Activated CD4-positive, alpha-beta T cell treated with anti-CD3 and anti-CD28 coated beads for 36 hours (primary cell): ENCODE measurements at regions of chr4 and their contacts with region 1.

Region 1: DNA sequence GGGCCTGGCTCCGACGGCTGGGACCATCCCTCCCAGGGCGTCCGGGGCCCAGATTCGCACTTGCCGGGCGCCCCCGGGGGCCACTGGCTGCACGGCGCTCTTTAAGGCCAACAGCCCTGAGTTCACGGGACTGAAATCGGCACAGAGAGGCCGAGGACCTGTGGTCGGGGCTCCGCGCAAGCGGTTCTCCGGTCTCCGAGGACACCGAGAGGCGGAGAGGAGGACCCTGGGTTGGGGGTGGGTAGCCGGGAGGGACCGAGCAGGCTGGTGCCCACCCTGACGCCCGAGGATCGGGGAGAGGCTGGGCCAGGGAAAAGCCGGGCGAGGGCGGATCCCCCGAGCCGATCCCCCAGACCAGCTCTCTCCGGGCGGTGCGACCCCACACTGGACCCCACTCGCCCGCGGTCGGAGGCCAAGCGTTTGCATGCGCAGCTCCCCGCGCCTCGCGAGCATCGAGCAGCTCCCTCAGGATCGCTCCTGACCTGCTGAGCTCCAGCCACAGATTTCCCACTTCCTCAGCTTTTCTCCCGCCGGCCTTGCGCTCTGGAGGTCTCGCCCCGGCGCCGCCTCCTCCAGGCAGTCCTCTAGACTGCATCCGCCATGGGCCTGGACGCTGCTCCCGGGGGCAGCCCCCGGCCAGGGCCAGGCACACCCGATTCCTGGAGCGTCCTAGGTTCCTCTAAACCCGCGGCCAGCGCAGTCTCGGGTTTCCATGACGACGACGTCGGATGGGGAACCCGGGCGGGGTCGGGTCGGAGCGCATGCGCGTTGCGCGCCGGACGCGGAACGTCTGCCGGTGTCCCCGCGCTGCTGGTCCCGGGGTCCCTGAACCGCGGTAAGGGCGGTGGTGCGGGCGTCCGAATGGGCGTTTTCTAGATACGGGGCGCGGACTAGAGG is 17.6 kb upstream of the NAT8L start:
- DNase-seq: peak; percentile 93
- ATAC-seq: peak; percentile 87
- H3K4me3 Mint-ChIP-seq: peak overlapping the region; percentile 70
- H3K27ac Mint-ChIP-seq: no peak overlapping the region
- H3K4me1 Mint-ChIP-seq: no peaks in the 10 kb centered on the region
- H3K27me3 Mint-ChIP-seq: peaks cover 15% of the 10 kb centered on the region

Region 2: GRCh38 chr4:2059034-2059725 is 17.7 kb after region 1 on chr4 and contains the start of gene NAT8L:
- CTCF ChIA-PET with region 1: interaction called, 3 read pairs
- POLR2A ChIA-PET with region 1: no interaction called
- intact Hi-C with region 1: loop called (anchors 2 kb)
- DNase-seq: peak; percentile 51
- ATAC-seq: peak; percentile 56
- H3K4me3 Mint-ChIP-seq: no peak within 1 kb of the TSS
- H3K27ac Mint-ChIP-seq: no peak within 1 kb of the TSS
- H3K4me1 Mint-ChIP-seq: peaks cover 2% of the 10 kb centered on the region
- H3K27me3 Mint-ChIP-seq: peaks cover 22% of the 10 kb centered on the region
- total RNA-seq, gene NAT8L: 0.39 to 0.55 TPM

Region 3: DNA sequence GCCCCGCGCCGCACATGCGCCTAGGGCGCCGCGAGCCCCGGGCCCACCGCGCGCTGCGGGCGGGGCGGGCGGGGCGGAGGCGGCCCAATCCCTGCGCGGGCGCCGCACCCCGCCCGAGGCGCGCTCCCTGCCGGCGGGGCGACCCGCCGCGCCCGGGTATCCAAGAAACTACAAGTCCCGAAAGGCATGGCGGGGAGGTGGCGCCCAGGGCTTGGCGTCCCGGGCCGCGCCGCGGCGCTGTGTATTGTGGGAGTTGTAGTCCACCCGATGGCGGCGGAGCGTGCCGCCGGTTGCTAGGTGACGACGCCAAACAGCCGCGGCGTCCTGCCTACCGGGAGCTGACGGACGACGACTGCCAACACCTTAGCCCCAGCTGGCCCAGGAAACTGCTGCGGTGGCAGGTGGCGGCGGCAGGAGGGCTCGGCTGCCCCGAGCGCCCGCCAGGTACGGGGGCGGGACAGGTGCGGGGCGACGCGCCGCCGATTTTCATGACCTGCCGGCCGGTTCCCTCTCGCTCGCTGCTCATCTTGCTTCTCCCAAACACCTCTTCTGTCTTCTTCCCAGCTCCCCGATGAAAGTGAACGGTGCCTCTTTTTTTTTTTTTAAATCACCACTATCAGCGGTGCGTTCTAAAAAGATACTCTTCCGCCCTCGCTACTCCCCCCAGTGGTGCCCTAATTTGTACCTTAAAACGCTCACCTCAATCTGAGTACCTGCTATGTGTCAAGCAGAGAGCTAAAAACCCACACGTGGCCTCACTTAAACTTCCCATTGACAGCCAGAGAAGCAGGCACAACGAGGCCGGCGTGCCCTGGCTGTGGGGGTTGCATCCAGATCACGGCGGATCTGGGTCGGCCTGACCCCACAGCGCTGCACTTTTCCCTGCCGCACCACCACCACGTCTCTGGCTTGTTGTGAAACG is 377.4 kb after region 1 on chr4 and contains the start of gene CFAP99:
- CTCF ChIA-PET with region 1: no interaction called
- POLR2A ChIA-PET with region 1: no interaction called
- intact Hi-C with region 1: loop called in 1 of 2 experiments (anchors 2 kb)
- DNase-seq: peak; percentile 99
- ATAC-seq: peak; percentile 93
- H3K4me3 Mint-ChIP-seq: peak within 1 kb of the TSS; percentile 82
- H3K27ac Mint-ChIP-seq: peak within 1 kb of the TSS; percentile 68
- H3K4me1 Mint-ChIP-seq: peaks cover 39% of the 10 kb centered on the region
- H3K27me3 Mint-ChIP-seq: peaks cover 27% of the 10 kb centered on the region
- total RNA-seq, gene CFAP99: 0.05 TPM in 1 of 2 experiments, not detected in the other